Prostate gland (tissue), 2 donors: ENCODE measurements at regions of chr3 and their contacts with region 1.

Region 1: DNA sequence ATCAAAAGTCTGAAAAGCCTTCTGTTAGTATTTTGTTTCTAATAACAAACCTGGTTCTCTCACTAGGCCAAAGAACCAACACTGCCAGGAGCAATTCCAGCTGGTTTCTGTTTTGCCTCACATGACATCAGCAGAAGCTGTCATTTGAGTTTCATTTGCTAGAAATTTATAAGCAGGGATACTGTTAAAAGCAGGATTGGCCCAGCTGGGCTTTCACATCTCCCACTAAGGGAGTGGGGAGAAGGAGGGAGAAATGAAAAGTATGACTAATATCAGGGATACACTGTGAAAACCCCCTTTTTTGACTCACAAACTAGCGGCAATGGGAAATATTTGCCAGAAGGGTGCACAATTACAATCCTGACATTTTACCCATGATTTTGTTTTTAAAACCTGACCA is 5.3 kb downstream of the CCDC80 start:
- DNase-seq: no peak
- H3K4me3 ChIP-seq: no peak overlapping the region
- H3K27ac ChIP-seq: peak overlapping the region in 1 of 2 donors; percentile 30
- H3K4me1 ChIP-seq: no peaks in the 10 kb centered on the region
- H3K27me3 ChIP-seq: no peaks in the 10 kb centered on the region
- CTCF ChIP-seq: no peak
- POLR2A ChIP-seq: no peak

Region 2: DNA sequence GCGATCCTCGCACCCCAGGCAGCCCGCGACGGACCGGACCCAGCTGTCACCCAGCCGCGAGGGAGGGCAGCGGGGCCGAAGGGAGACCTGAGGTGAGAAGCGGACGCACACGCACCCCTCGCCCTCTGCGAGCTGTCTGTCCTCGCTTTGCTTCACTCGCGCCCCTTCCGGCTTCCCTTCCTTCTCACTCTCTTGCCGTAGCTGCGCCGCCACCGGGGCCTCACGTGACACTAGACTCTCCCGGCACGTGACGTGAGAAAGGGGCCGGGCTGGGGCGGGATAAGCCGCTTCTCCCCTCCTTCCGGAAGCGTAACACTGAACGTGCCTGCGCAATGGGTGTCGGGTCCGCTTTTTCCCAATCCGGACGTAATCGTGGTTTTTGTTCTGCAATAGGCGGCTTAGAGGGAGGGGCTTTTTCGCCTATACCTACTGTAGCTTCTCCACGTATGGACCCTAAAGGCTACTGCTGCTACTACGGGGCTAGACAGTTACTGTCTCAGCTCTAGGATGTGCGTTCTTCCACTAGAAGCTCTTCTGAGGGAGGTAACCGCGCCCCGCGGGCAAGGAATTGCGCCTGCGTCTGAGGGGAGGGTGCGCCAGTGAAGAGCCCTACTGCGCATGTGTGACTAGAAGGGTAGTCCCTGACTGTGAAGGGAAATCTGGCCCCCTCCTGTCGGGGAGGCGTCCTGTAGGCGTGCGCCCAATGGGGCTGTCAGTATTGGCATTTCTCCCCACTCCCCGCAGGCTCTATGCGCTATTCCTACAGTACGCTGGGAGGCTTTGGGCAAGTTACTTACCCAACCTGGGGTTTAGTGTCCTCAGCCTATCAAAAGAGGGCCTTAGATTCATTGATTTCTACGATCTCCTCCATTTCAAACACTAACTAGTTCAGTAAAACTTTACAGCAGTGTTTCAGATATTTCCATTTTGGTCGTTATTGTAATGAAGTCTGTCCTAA is 73.7 kb before region 1 on chr3 and contains the starts of genes ATG3 and SLC35A5:
- intact Hi-C with region 1: loop called (anchors 5 kb)
- DNase-seq: peak; percentile 98
- H3K4me3 ChIP-seq: peak within 1 kb of the TSS; percentile 92 to 93
- H3K27ac ChIP-seq: peak within 1 kb of the TSS; percentile 94
- H3K4me1 ChIP-seq: no peaks in the 10 kb centered on the region
- H3K27me3 ChIP-seq: no peaks in the 10 kb centered on the region
- CTCF ChIP-seq: peak in 1 of 4 experiments; percentile 21
- POLR2A ChIP-seq: peak; percentile 57
- total RNA-seq, gene ATG3: 45.7 to 73.5 TPM
- total RNA-seq, gene SLC35A5: 40.4 to 62.3 TPM

Region 3: DNA sequence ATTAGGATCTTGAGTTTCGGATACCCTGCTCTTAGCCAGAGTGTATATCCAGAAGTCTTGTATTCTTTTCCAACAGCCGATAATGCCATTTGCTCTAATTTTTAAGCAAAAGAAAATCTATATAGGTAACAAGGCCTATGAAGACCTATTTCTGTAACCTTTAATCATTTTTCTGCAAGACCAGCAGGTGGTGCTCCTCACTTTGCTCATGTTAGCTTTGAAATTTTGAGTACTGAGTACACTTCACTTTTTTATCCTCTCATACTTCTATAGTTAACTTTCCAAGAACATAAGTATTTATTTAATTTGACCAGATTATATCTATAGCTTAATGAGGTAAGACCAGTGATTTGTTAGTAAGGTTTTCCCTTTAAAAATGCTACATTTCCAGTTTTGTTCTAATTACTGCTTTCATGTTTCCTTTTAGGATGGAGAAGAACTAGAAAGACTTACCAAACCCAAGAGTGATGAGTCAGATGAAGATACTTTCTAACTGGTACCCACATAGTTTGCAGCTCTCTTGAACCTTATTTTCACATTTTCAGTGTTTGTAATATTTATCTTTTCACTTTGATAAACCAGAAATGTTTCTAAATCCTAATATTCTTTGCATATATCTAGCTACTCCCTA is 53.3 kb before region 1 on chr3:
- intact Hi-C with region 1: loop called (anchors 5 kb)
- DNase-seq: no peak
- H3K4me3 ChIP-seq: no peak overlapping the region
- H3K27ac ChIP-seq: no peak overlapping the region
- H3K4me1 ChIP-seq: no peaks in the 10 kb centered on the region
- H3K27me3 ChIP-seq: no peaks in the 10 kb centered on the region
- CTCF ChIP-seq: peak in 3 of 4 experiments; percentile 26 to 56 (median 53)
- POLR2A ChIP-seq: no peak